HepG2 (cell line): ENCODE measurements at regions of chr18 and their contacts with region 1.

Region 1: DNA sequence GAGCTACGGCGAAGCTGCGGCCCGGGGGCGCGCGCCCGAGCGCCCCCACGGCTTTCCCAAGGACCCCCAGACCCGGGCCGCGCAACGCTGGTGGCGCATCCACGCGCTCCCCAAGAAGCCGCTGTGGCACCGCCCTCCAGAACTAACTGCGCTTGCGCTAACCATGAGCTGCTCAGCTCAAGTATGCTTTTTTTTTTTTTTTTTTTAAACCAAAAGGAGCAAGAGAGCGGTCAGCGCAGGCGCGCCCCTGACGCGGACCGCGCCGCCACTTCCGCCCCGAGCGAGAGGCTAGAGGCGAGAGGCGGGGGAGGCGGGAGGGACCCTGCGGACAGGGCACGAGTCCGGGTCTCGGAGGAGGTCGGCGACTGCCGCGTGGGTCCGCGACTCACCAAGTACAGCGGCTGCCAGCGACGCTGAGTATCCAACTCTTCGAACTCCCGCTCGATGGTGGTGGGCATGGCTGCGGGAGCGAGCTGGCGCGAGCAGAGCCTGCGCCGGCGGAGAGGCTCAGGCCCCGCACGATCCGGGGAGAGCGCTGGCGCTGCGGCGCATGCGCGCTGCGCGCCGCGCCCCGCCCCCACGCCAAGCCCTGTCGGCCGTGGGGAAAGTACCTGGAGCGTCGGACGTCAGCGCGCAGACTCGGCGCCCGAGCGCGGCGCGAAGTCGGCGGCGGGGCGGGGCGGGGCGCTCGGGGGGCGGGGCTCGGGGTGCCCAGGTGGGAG is at the start of gene PTPN2:
- DNase-seq: peak; percentile 90
- ATAC-seq: peak; percentile 90
- H3K4me3 ChIP-seq: peak within 1 kb of the TSS; percentile 76 to 94 (median 83)
- H3K27ac ChIP-seq: peak within 1 kb of the TSS; percentile 99
- H3K4me1 ChIP-seq: peaks cover 57% of the 10 kb centered on the region
- H3K27me3 ChIP-seq: no peaks in the 10 kb centered on the region; a peak in 1 of 5 replicates
- CTCF ChIP-seq: no peak
- EP300 ChIP-seq: no peak
- POLR2A ChIP-seq: peak; percentile 94 to 99
- RAD21 ChIP-seq: peak; percentile 69
- total RNA-seq, gene PTPN2: 41.5 and 50.4 TPM in 2 replicates

Region 2: DNA sequence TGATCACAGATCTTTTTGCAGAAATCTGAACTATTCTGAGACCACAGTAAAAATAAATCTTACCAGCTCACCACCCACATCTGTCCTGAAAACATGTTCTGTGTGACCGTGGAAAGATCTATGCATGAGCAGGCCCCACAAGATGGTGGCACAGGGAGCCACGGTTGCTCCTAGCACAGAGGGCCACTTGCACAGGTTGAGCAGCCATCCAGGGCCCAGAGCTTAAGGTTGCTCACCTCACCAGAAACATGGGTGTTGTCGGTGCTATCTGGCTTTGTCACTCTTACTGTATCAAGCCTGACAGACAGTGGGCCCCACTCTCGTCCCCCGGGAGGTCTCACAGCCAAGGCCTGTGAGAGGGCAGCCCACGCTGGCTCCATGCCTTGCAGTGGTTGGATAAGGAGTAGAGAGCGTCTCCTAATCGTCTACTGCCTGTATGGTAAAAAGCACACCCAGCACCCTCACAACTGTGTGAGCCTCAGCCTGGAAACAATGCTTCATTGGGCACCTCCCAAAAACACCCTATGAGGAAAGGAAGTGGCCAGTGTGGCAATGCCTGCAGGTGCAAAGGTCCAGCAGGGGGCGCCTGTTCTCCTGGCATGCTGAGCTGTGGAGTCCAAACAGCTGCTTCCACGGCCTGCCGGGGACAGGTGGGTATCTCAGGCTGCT is 556.2 kb before region 1 on chr18:
- CTCF ChIA-PET with region 1: no interaction called
- POLR2A ChIA-PET with region 1: no interaction called
- in situ Hi-C with region 1: no loop called
- intact Hi-C with region 1: no loop called
- DNase-seq: peak; percentile 69
- ATAC-seq: peak; percentile 95
- H3K4me3 ChIP-seq: no peak overlapping the region
- H3K27ac ChIP-seq: no peak overlapping the region
- H3K4me1 ChIP-seq: no peaks in the 10 kb centered on the region; the same call in 1 of the 2 replicates
- H3K27me3 ChIP-seq: no peaks in the 10 kb centered on the region
- CTCF ChIP-seq: peak; percentile 85
- EP300 ChIP-seq: no peak
- POLR2A ChIP-seq: no peak
- RAD21 ChIP-seq: peak; percentile 64; the same call in 1 of the 2 replicates

Region 3: DNA sequence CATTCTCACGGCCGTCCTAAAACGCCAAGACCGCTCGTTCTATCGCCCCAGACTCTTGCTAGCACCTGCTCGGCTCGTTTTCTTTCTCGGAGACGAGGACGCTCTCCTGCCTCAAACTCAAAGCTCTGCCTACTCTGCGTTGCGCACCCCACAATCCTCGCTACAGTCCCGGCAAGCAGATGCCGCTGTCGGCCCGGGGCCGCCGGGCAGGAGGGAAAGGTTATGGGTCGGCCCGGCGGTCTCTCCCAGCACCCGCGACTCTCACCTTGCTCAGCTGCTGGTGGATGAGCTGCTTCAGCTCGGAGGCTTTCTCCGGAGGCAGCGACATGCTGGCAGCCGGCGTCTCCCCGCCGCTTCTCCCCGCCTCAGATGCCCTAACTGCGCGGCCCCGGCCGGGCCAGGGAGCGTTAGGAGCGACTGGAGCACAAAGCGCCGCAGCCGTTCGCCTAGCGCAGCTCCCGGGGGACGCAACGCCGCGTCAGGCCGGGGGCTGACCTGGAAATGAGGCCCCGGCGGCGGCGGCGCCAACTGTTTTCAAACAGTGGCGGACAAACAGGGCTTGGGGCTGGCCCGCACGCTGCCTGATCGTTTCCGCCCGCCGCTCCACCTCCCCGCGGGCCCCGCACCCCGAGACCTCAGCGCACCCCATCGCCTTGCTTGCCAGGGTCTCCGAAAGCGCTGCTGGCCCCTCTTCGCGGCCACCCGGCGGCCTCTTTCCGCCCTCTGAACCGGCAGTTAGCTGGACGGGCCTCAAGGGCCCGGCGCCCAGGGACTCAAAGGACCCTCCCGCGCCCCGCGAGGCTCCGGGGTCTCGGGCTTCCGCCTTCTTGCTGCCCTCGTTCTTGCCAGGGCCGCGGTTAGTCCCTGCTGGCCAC is 181.4 kb before region 1 on chr18 and contains the starts of genes CEP76 and PSMG2:
- CTCF ChIA-PET with region 1: no interaction called
- POLR2A ChIA-PET with region 1: interaction called, 15 read pairs
- in situ Hi-C with region 1: no loop called
- intact Hi-C with region 1: no loop called
- DNase-seq: peak; percentile 81
- ATAC-seq: peak; percentile 96
- H3K4me3 ChIP-seq: peak within 1 kb of the TSS; percentile 91 to 99 (median 93)
- H3K27ac ChIP-seq: peak within 1 kb of the TSS; percentile 89
- H3K4me1 ChIP-seq: peaks cover 57% of the 10 kb centered on the region
- H3K27me3 ChIP-seq: no peaks in the 10 kb centered on the region; a peak in 2 of 5 replicates
- CTCF ChIP-seq: 0 out of 2 replicates have a peak, but pooled peaks have one; percentile 2
- EP300 ChIP-seq: peak in 1 of 2 experiments; percentile 13; a peak in 1 of 4 replicates
- POLR2A ChIP-seq: peak; percentile 82 to 91
- RAD21 ChIP-seq: peak; percentile 43; the same call in 1 of the 2 replicates
- total RNA-seq, gene CEP76: 15.1 and 19.4 TPM in 2 replicates
- total RNA-seq, gene PSMG2: 94.8 and 133 TPM in 2 replicates

Region 4: GRCh38 chr18:12768625-12769024 is 115.2 kb before region 1 on chr18:
- CTCF ChIA-PET with region 1: no interaction called
- POLR2A ChIA-PET with region 1: interaction called, 12 read pairs
- in situ Hi-C with region 1: no loop called
- intact Hi-C with region 1: no loop called
- DNase-seq: no peak
- ATAC-seq: no peak
- H3K4me3 ChIP-seq: no peak overlapping the region; a peak in 1 of 6 replicates
- H3K27ac ChIP-seq: no peak overlapping the region
- H3K4me1 ChIP-seq: peaks cover 39% of the 10 kb centered on the region
- H3K27me3 ChIP-seq: no peaks in the 10 kb centered on the region
- CTCF ChIP-seq: no peak
- EP300 ChIP-seq: no peak
- POLR2A ChIP-seq: no peak
- RAD21 ChIP-seq: no peak

Region 5: DNA sequence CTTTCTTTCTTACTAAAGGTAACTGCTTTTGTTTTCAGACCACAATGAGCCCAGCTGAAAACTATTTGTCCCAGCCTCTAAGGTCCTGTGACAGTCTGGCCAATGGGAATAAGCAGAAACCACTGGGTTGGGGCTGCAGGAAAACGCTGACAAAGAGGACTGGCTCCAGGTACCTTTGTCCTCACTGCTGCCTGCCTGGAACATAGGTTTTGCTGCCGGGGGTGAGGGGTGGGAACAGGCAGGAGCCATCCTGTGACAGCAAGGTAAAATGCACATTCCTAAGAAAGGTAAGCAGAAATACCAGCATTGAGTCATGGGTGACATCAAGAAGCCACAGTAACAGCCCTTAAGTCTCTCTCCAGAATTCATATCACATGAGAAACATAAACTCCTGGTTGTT is 21.4 kb before region 1 on chr18:
- CTCF ChIA-PET with region 1: no interaction called
- POLR2A ChIA-PET with region 1: interaction called, 19 read pairs
- in situ Hi-C with region 1: no loop called
- intact Hi-C with region 1: no loop called
- DNase-seq: no peak
- ATAC-seq: peak; percentile 39; the same call in 2 of the 3 replicates
- H3K4me3 ChIP-seq: no peak overlapping the region
- H3K27ac ChIP-seq: no peak overlapping the region
- H3K4me1 ChIP-seq: peaks cover 24% of the 10 kb centered on the region
- H3K27me3 ChIP-seq: no peaks in the 10 kb centered on the region
- CTCF ChIP-seq: no peak
- EP300 ChIP-seq: no peak
- POLR2A ChIP-seq: no peak
- RAD21 ChIP-seq: no peak

Region 6: DNA sequence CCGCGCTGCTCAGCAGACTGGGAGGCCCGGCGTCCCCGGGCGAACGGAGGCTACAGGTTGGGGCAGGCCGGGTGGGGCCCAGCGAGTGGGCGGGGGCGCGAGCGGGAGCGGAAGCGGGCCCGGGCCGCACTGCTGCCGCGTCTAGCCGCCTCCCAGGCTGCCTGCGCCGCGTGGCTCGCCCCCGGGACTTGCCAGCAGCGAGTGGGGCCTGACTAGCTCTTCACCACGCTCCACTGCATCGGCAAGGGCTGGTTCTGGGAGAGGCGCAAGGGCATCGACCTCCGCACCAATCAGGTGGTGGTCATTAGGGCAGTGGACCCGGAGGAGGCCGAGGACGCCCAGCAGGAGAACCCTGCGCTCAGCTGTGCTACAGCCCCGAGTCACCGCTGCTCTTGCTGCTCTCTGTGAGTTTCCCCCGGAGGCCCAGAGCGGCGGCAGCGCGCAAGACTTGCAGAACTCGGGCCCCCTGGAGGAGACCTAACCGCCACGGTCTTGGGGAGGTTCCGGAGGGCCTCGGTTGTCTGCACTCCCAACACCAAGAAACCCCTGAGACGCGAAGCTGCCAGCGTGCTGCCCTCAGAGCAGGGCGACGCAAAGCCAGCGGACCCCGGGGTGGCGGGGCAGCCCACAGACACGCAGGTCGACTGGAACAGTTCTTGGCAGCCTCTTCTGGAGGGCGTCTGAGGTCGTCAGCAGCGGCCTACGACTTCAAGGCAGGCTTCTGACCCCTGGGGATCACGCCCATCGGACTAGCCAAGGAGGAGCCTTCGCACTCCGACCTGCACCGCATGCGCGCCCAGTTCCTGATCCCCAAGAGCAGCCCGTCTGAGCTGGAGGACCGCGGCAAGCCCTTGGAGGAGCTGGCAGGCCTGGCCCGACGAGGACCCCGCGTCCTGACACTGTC is 27.4 kb after region 1 on chr18:
- CTCF ChIA-PET with region 1: no interaction called
- POLR2A ChIA-PET with region 1: interaction called, 14 read pairs
- in situ Hi-C with region 1: no loop called
- intact Hi-C with region 1: no loop called
- DNase-seq: no peak
- ATAC-seq: peak; percentile 58
- H3K4me3 ChIP-seq: peak overlapping the region; percentile 8 to 33 (median 30); a peak in 4 of 6 replicates
- H3K27ac ChIP-seq: no peak overlapping the region
- H3K4me1 ChIP-seq: peaks cover 17% of the 10 kb centered on the region
- H3K27me3 ChIP-seq: peaks cover 1 to 19% of the 10 kb centered on the region in 2 experiments; a peak in 3 of 5 replicates
- CTCF ChIP-seq: no peak
- EP300 ChIP-seq: no peak
- POLR2A ChIP-seq: no peak
- RAD21 ChIP-seq: no peak

Region 7: DNA sequence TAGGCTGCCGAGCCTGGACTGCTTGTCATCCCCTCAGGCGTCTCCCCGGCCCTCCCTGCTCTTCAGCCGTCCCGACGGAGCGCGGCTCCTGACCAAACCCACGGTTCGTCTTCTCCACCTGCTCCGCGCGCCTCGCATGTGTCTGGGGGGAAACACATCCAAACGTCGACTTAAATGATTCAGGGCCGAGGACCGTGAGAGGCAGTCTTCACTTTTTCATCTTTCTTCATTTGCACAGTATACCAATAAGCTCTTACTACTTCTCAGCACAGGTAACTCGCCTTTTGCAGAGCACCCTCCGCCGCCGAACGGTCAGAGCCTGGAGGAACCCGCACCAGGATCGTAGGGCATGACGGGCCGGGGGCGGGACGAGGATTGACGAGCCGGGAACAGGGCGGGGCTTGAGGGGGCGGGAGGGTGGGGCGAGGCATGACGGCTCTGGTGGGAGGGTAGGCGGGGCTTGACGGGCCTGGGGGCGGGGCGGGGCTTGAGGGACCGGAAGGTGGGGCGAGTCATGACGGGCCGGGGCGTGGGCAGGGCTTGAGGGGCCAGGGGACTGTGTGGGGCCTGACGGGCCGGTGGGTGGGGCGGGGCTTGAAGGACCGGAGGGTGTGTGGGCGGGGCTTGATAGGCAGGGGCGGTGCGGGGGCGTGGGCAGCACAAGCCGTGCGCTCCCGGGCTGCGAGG is 63.7 kb after region 1 on chr18 and contains the start of gene SEH1L:
- CTCF ChIA-PET with region 1: no interaction called
- POLR2A ChIA-PET with region 1: interaction called, 26 read pairs
- in situ Hi-C with region 1: no loop called
- intact Hi-C with region 1: loop called (anchors 5 kb)
- DNase-seq: peak; percentile 87
- ATAC-seq: peak; percentile 91
- H3K4me3 ChIP-seq: peak within 1 kb of the TSS; percentile 73 to 84 (median 81)
- H3K27ac ChIP-seq: peak within 1 kb of the TSS; percentile 99
- H3K4me1 ChIP-seq: peaks cover 50% of the 10 kb centered on the region
- H3K27me3 ChIP-seq: no peaks in the 10 kb centered on the region
- CTCF ChIP-seq: no peak
- EP300 ChIP-seq: no peak
- POLR2A ChIP-seq: no peak; a peak in 2 of 4 replicates
- RAD21 ChIP-seq: 0 out of 2 replicates have a peak, but pooled peaks have one; percentile 10
- total RNA-seq, gene SEH1L: 59.6 and 96.2 TPM in 2 replicates

Region 8: DNA sequence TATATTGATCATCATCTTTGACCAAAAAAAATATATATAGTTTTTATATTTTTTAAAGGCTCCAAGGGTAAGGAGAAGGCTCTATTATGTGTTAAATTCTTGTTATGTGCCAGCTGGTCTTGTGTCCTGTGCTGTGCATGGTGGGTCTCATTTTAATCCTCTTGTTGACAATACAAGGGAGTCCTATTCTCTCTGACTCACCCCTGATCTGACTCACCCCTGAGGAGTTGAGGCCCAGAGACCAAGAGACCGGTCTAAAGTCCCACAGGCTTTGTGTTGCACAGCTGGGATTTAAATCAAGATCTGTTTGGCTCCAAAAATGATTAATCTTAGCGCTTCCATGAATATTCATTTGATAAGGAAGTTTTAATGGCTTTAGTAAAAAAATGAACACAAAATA is 1005.8 kb after region 1 on chr18:
- CTCF ChIA-PET with region 1: no interaction called
- POLR2A ChIA-PET with region 1: no interaction called
- in situ Hi-C with region 1: no loop called
- intact Hi-C with region 1: no loop called
- DNase-seq: peak; percentile 35
- ATAC-seq: peak; percentile 81
- H3K4me3 ChIP-seq: no peak overlapping the region
- H3K27ac ChIP-seq: no peak overlapping the region
- H3K4me1 ChIP-seq: peaks cover 9% of the 10 kb centered on the region; the same call in 1 of the 2 replicates
- H3K27me3 ChIP-seq: peaks cover 0 to 19% of the 10 kb centered on the region in 2 experiments; a peak in 3 of 5 replicates
- CTCF ChIP-seq: no peak
- EP300 ChIP-seq: no peak
- POLR2A ChIP-seq: no peak
- RAD21 ChIP-seq: no peak